ENCODE measurements at regions of chr3 and their contacts with region 1.

Region 1: DNA sequence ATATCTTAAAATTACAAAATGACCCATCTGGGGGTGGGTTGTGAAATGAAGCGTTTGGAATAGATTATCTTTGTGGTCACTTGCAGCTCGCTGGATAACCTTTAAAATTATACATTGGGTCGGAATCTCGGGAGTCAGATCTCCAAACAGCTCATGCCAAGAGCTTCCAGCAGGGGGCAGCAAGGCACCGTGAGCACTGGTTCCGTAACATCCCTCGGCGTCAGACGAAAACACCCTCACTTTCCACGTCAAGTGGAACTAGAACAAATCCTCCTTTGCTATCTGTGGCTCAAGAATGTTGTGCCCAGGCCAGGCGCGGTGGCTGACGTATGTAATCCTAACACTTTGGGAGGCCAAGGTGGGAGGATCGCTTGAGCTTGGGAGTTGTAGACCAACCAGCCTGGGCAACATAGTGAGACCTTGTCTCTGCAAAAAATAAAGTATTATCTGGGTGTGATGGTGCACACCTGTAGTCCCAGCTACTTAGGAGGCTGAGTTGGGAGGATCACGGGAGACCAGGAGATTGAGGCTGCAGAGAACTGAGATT is 31.1 kb downstream of the UMPS start:
- DNase-seq: peak; percentile 77
- H3K4me3 ChIP-seq: no peak overlapping the region
- H3K27ac ChIP-seq: peak overlapping the region; percentile 4 to 74; a peak in 2 of 4 replicates
- H3K4me1 ChIP-seq: peaks cover 9 to 47% of the 10 kb centered on the region in 2 experiments; a peak in 3 of 4 replicates
- H3K27me3 ChIP-seq: no peaks in the 10 kb centered on the region
- CTCF ChIP-seq: peak; percentile 98
- EP300 ChIP-seq: no peak
- RAD21 ChIP-seq: peak; percentile 96

Region 2: GRCh38 chr3:124579641-124580040 is 181.7 kb before region 1 on chr3:
- CTCF ChIA-PET with region 1: no interaction called
- POLR2A ChIA-PET with region 1: no interaction called
- DNase-seq: no peak
- H3K4me3 ChIP-seq: no peak overlapping the region
- H3K27ac ChIP-seq: no peak overlapping the region
- H3K4me1 ChIP-seq: peaks cover 4 to 5% of the 10 kb centered on the region in 2 experiments; a peak in 1 of 4 replicates
- H3K27me3 ChIP-seq: no peaks in the 10 kb centered on the region
- CTCF ChIP-seq: no peak
- EP300 ChIP-seq: no peak
- RAD21 ChIP-seq: no peak

Region 3: GRCh38 chr3:124747111-124747981 is 14.0 kb before region 1 on chr3:
- CTCF ChIA-PET with region 1: interaction called, 17 read pairs
- POLR2A ChIA-PET with region 1: no interaction called
- DNase-seq: no peak
- H3K4me3 ChIP-seq: no peak overlapping the region
- H3K27ac ChIP-seq: no peak overlapping the region
- H3K4me1 ChIP-seq: no peaks in the 10 kb centered on the region
- H3K27me3 ChIP-seq: no peaks in the 10 kb centered on the region
- CTCF ChIP-seq: no peak
- EP300 ChIP-seq: no peak
- RAD21 ChIP-seq: no peak

Region 4: GRCh38 chr3:124800511-124801258 is 39.4 kb after region 1 on chr3:
- CTCF ChIA-PET with region 1: interaction called, 15 read pairs
- POLR2A ChIA-PET with region 1: no interaction called
- DNase-seq: peak; percentile 67
- H3K4me3 ChIP-seq: no peak overlapping the region
- H3K27ac ChIP-seq: peak overlapping the region; percentile 21 to 85; a peak in 2 of 4 replicates
- H3K4me1 ChIP-seq: peaks cover 9 to 43% of the 10 kb centered on the region in 2 experiments
- H3K27me3 ChIP-seq: no peaks in the 10 kb centered on the region
- CTCF ChIP-seq: no peak
- EP300 ChIP-seq: peak in 1 of 2 experiments; percentile 27; a peak in 1 of 4 replicates
- RAD21 ChIP-seq: no peak

Region 5: GRCh38 chr3:124916837-124917409 is 155.6 kb after region 1 on chr3:
- CTCF ChIA-PET with region 1: interaction called, 11 read pairs
- POLR2A ChIA-PET with region 1: no interaction called
- DNase-seq: peak; percentile 51
- H3K4me3 ChIP-seq: no peak overlapping the region
- H3K27ac ChIP-seq: peak overlapping the region in 1 of 2 experiments; percentile 56; a peak in 2 of 4 replicates
- H3K4me1 ChIP-seq: peaks cover 0 to 37% of the 10 kb centered on the region in 2 experiments; a peak in 1 of 4 replicates
- H3K27me3 ChIP-seq: no peaks in the 10 kb centered on the region
- CTCF ChIP-seq: no peak
- EP300 ChIP-seq: peak in 1 of 2 experiments; percentile 50; a peak in 1 of 4 replicates
- RAD21 ChIP-seq: no peak

Region 6: GRCh38 chr3:124942613-124943012 is 181.3 kb after region 1 on chr3:
- CTCF ChIA-PET with region 1: interaction called, 10 read pairs
- POLR2A ChIA-PET with region 1: no interaction called
- DNase-seq: no peak
- H3K4me3 ChIP-seq: no peak overlapping the region
- H3K27ac ChIP-seq: no peak overlapping the region
- H3K4me1 ChIP-seq: peaks cover 0 to 3% of the 10 kb centered on the region in 2 experiments; a peak in 1 of 4 replicates
- H3K27me3 ChIP-seq: no peaks in the 10 kb centered on the region
- CTCF ChIP-seq: no peak
- EP300 ChIP-seq: no peak
- RAD21 ChIP-seq: no peak

Region 7: GRCh38 chr3:125585595-125586223 is 824.4 kb after region 1 on chr3:
- CTCF ChIA-PET with region 1: interaction called, 19 read pairs
- POLR2A ChIA-PET with region 1: no interaction called
- DNase-seq: peak; percentile 66
- H3K4me3 ChIP-seq: peak overlapping the region in 1 of 2 experiments; percentile 9; a peak in 1 of 4 replicates
- H3K27ac ChIP-seq: no peak overlapping the region
- H3K4me1 ChIP-seq: peaks cover 5 to 6% of the 10 kb centered on the region in 2 experiments; a peak in 3 of 4 replicates
- H3K27me3 ChIP-seq: no peaks in the 10 kb centered on the region
- CTCF ChIP-seq: peak; percentile 94
- EP300 ChIP-seq: no peak
- RAD21 ChIP-seq: peak; percentile 97

Measured in SK-N-SH (cell line).